ENCODE measurements at regions of chr13 and their contacts with region 1.

Region 1: GRCh38 chr13:27712421-27712820 is 79.9 kb upstream of the GSX1 start:
- DNase-seq: peak in 2 of 3 donors; percentile 47 to 57
- ATAC-seq: peak; percentile 80 to 90 (median 84)
- H3K4me3 ChIP-seq: no peak overlapping the region
- H3K27ac ChIP-seq: no peak overlapping the region
- H3K4me1 ChIP-seq: no peaks in the 10 kb centered on the region
- H3K27me3 ChIP-seq: no peaks in the 10 kb centered on the region
- CTCF ChIP-seq: peak; percentile 37 to 54 (median 46)
- POLR2A ChIP-seq: no peak

Region 2: DNA sequence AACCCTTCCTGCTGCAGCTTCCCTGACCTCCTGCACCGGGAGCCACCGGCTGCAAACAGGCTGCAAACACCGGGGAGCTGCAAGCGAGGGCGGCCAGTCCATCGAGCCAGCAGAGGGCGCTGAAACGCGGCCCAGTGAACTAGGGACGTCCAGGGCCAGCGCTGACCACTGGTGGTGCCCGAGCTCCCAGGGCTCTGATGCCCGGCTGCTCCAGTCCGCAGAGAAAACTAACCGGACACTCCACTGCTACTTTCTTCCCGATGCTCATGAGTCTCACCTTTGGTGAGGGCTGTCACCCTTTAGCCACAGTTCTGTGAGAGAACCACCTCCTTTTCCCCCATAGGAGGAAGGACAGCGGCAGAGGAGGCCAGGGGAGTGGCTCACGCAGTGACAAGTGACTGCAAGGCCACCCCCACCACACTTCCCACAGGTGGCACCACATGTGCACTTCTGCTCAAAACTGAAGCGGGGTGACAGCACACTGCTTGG is 179.2 kb before region 1 on chr13:
- intact Hi-C with region 1: loop called in 1 of 2 experiments (anchors 10 kb)
- DNase-seq: peak; percentile 90 to 91 (median 91)
- ATAC-seq: peak; percentile 98 to 100 (median 100)
- H3K4me3 ChIP-seq: no peak overlapping the region
- H3K27ac ChIP-seq: no peak overlapping the region
- H3K4me1 ChIP-seq: peaks cover 0 to 8% (median 0%) of the 10 kb centered on the region in 4 donors
- H3K27me3 ChIP-seq: no peaks in the 10 kb centered on the region
- CTCF ChIP-seq: peak; percentile 95 to 99 (median 98)
- POLR2A ChIP-seq: no peak

Measured in right lobe of liver (tissue), 6 donors.